ENCODE measurements at regions of chr2 and their contacts with region 1.

Region 1: DNA sequence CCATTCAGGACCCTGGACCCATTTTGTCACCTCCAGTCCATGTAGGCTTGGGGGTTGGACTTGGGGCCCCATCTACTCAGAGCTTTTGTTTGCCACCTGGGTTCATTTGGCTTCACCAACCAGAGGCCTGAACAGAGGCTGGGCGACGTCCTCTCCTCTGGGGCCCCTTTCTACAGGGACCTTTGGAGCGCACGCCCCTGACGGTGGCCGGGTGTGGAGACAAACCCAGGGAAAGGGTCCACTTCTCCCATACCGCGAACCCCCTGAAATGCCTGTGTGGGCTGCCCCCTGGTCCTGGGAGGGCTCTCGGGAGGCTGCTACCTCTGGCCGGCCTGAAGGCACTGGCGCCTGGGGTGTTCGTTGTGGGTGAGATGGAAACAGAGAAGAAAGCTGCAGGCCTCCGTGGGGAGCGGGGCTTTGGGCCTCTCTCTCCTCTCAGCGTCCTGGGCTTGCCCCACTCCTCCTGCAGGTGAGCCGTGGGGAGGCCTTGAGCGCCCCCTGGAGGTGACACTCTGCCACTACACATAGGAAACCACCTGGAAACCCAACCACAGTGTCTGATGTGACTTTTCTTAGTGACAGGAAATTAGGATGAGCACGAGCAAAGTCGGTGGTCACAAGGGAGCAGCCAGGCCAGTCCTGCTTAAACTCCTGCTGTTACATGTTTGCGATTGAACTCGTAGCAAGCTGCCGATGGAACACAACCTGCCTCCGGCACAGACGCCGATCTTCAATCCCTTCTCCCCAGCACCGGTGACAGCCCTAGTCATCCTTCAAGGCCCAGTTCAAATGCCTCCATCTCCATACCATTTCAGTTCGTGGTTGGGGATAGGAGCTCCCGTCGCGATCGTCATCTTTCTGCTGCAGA is 12.0 kb upstream of the NTSR2 start:
- H3K4me3 ChIP-seq: no peak overlapping the region
- H3K27ac ChIP-seq: peak overlapping the region; percentile 16; the same call in 1 of the 2 replicates
- H3K4me1 ChIP-seq: no peaks in the 10 kb centered on the region
- CTCF ChIP-seq: peak; percentile 88

Region 2: GRCh38 chr2:11477994-11478393 is 204.0 kb before region 1 on chr2:
- CTCF ChIA-PET with region 1: interaction called, 30 read pairs
- POLR2A ChIA-PET with region 1: no interaction called
- H3K4me3 ChIP-seq: no peak overlapping the region
- H3K27ac ChIP-seq: no peak overlapping the region
- H3K4me1 ChIP-seq: no peaks in the 10 kb centered on the region; the same call in 1 of the 2 replicates
- CTCF ChIP-seq: peak; percentile 68

Region 3: DNA sequence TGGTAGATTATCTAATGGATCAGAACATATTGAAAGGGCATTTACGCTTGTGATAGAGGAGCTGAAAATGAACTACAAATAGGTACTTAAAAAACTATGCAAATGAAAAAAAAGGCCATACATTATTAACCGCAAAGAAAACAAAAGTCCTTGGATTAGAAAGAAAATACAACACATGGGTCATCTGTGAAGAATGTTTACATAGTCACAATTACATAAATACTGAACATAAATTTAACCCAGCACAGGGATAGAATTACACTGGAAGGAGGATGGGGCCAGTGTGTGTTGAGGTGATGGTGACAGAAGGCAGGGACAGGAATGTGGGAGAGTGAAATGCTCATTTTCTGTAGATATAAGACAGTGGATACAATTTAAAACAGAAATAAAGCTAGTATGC is 18.5 kb before region 1 on chr2:
- CTCF ChIA-PET with region 1: interaction called, 32 read pairs
- POLR2A ChIA-PET with region 1: no interaction called
- H3K4me3 ChIP-seq: no peak overlapping the region
- H3K27ac ChIP-seq: no peak overlapping the region
- H3K4me1 ChIP-seq: no peaks in the 10 kb centered on the region; the same call in 1 of the 2 replicates
- CTCF ChIP-seq: no peak

Region 4: DNA sequence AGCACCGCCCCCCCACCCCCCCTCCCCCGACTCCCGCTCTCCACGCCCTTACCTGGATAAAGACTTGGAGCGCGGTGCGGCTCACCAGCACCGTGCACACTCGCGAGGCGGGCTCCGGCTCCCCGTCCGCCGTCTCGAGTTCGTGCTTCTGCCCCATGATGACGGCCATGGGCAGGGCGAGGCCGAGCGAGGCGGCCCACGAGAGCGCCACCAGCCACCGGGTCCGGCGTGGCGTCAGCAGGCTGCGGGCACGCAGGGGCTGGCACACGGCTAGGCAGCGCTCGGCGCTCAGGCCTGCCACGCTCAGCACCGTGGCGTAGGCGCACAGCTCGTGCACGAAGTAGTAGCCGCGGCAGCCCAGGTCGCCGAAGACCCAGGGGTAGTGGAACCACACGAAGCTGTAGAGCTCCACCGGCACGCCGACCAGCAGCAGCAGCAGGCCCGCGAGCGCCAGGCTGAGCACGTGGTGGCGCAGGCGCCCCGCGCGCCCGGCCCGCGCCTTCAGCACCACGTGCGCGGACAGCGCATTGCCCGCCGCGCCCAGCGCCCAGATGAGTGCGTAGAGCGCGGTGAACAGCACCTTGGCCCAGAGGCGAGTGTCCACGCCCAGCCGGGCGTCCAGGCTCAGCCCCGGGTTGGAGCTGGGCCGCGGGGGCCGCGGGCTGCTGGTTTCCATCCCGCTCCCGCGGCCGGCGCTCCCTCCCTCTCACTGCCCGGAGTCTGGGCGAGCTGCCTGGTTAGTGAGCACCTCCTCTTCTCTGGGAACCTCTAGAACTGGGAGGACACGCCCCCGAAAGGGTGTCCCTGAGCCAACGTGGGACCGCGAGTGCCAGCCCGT is 12.3 kb before region 1 on chr2 and contains the start of gene NTSR2:
- CTCF ChIA-PET with region 1: interaction called, 32 read pairs
- POLR2A ChIA-PET with region 1: no interaction called
- H3K4me3 ChIP-seq: no peak within 1 kb of the TSS
- H3K27ac ChIP-seq: no peak within 1 kb of the TSS
- H3K4me1 ChIP-seq: no peaks in the 10 kb centered on the region
- CTCF ChIP-seq: no peak

Region 5: DNA sequence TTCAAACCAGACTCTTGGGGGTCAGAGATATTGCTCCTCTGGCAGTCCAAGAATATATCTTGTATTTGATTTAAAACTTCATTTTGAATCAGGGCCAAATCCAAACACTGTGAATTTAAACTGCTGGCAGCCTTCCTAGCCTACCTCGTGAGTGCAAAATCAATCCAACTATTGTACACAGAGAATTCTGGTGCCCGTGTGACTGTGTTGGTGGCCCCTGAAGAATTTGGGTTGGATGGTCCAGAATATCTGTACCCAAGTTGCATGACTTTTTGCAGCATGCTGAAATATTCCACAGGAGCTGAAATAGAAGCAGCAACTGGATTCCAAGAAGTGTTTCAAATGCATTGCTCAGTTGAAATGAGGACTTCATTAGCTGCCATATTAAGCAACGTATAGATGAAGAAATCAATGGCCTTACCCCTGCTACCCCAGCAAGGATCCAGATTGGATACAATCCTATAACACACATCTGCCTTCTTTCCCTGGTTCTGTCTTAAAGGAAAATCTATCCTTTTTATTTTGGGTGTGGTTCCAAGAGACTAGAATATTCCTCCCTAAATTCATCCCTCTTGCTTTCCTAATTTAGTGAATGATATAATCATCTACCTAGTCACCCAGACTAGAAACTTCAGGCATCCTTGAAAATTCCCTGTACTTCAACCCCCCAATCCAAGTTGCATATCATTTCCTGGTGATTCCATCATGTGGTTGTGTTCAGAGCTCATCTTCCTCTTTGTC is 29.2 kb after region 1 on chr2:
- CTCF ChIA-PET with region 1: no interaction called
- POLR2A ChIA-PET with region 1: no interaction called
- H3K4me3 ChIP-seq: no peak overlapping the region
- H3K27ac ChIP-seq: no peak overlapping the region
- H3K4me1 ChIP-seq: no peaks in the 10 kb centered on the region
- CTCF ChIP-seq: no peak

Measured in HEK293 (cell line).